RWPE1 (cell line): ENCODE measurements at regions of chr9 and their contacts with region 1.

Region 1: DNA sequence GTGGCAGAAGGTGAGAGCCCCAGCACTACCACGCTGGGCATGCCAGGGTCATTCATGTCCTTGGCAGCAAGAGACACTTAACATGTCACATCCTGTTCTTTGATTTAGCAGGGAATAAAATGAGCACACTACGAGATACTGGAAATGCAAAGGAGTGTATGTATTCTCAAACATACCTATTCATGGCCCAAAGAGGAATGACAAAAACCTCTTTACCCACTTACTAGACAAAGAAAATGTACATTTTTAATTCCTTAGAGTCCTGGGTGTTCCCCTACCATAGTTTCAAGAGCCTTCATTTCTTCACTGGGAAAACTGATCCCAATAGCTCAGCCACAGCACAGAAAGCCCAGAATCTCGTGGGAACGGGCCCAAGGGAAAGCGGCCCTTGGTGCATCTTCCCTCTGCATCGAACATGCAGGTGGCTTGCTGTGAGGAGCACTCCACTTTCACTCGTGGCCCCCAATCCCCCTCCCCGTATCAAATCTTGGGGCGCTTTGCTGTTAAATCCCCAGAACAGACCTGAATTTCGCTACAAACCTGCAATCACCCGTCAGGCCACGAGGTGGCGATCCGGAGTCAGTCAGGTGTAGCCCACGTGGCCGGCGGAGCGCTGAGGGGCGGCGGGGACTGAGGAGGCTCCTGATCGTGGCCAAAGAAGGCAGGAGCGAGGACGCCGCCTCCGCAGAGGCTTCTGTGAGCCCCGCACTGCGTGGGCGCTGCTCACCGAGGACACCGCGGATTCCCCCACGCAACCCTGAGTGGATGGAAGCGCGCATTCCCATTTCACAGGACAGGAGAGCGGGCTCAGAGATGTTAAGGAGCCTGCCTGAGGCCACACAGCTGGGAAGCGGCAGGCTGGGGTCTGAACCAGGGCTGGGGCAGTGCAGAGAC is 91.4 kb downstream of the LMX1B start:
- DNase-seq: peak; percentile 88
- H3K27ac ChIP-seq: peak overlapping the region; percentile 63
- CTCF ChIP-seq: peak; percentile 99

Region 2: GRCh38 chr9:126471084-126471624 is 234.0 kb before region 1 on chr9:
- CTCF ChIA-PET with region 1: no interaction called
- POLR2A ChIA-PET with region 1: no interaction called
- DNase-seq: no peak
- H3K27ac ChIP-seq: no peak overlapping the region
- CTCF ChIP-seq: no peak

Region 3: DNA sequence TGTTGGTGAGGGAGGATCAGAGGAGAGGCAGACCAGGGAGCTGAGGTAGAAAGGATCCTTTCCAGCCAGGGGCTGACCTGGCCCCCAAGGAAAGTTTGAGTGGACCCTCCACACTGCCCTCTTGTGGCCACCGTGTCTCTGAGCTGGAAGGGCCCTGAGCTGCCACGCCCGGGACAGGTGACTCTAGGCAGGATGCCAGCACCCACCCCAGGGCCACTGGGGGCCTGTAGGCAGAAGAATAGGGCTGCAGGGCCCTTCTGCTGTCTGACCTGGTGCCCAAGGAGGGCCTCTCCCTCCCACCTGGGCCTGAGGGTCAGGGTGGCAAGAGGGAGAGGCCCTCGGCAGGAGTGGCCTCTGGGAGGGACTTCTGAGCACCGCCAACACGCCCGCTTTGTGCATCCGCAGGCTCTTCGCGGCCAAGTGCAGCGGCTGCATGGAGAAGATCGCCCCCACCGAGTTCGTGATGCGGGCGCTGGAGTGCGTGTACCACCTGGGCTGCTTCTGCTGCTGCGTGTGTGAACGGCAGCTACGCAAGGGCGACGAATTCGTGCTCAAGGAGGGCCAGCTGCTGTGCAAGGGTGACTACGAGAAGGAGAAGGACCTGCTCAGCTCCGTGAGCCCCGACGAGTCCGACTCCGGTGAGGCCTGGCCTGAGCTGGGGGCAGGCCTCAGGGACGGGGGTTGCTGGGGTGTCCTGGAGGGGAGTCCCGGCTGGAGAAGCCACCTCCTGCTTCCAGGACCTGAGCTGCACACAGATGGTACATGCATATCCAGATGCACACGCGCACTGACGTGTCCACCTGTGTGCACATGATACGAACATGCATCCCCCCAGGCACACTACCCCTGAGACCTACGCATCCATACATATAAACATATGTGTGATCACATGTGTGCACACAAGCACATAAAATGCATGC is 14.4 kb before region 1 on chr9:
- CTCF ChIA-PET with region 1: interaction called, 30 read pairs
- POLR2A ChIA-PET with region 1: no interaction called
- DNase-seq: peak; percentile 72
- H3K27ac ChIP-seq: no peak overlapping the region
- CTCF ChIP-seq: peak; percentile 83

Region 4: DNA sequence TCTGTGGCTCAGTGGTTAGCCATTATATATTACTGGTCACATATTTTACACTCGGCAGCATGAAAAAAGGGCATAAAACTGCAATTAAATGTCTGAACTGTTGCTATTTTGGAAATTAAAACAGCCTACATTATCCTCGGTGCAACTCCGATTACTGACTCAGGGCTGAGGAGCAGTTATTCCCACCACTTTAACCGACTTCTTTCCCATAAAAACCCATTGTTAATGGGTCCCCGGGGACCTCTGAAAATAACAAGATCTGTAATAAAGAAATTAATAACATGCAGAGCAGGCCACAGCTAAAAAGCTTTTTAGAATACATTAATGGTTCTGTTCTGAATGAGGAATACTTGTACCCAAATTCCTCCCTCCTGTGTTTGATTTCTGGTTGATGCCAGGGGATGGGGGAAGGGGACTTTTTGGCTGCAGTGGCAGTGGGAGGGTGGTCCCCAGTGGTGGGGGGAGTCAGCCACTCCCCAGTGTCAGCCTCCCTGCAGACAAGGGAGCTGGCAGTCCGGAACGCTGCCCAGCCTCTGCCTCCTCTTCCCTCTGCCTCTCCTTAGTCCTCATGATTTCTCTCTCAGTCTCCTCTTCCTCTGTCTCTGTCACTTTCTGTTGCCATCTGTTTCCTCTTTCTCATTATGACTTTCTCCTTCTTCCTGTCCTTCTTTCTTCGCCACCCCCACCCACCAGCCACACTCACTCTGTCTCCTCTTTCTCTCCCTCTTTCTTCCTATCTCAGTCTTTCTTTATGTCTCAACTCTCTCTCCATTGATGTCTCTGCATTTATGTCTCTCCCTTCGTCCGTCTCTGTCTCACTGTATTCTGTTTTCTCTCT is 40.7 kb after region 1 on chr9:
- CTCF ChIA-PET with region 1: interaction called, 11 read pairs
- POLR2A ChIA-PET with region 1: no interaction called
- DNase-seq: no peak
- H3K27ac ChIP-seq: no peak overlapping the region
- CTCF ChIP-seq: no peak

Region 5: DNA sequence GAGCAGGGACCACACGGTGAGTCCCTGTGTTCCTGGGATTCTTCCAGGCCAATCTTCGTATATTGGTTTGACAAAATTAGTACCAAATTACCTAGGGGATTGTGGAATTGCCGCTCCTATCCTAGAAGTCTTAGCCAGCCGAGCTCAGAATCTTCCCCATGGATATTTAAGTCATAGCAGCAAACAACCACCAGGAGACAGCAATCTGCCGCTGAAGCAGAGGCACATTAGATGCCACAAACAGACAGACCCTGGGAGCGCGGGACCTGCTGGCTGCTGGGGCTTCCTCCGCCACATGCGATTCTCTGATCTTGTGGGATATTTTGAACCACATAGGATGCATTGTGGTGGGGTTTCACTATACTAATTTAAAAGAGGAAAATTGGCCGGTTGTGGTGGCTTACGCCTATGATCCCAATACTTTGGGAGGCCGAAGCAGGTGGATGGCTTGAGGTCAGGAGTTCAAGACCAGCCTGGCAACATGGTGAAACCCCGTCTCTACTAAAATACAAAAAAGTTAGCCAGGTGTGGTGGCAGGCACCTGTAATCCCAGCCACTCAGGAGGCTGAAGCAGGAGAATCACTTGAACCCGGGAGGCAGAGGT is 68.0 kb after region 1 on chr9:
- CTCF ChIA-PET with region 1: interaction called, 231 read pairs
- POLR2A ChIA-PET with region 1: no interaction called
- DNase-seq: no peak
- H3K27ac ChIP-seq: no peak overlapping the region
- CTCF ChIP-seq: peak; percentile 52

Region 6: DNA sequence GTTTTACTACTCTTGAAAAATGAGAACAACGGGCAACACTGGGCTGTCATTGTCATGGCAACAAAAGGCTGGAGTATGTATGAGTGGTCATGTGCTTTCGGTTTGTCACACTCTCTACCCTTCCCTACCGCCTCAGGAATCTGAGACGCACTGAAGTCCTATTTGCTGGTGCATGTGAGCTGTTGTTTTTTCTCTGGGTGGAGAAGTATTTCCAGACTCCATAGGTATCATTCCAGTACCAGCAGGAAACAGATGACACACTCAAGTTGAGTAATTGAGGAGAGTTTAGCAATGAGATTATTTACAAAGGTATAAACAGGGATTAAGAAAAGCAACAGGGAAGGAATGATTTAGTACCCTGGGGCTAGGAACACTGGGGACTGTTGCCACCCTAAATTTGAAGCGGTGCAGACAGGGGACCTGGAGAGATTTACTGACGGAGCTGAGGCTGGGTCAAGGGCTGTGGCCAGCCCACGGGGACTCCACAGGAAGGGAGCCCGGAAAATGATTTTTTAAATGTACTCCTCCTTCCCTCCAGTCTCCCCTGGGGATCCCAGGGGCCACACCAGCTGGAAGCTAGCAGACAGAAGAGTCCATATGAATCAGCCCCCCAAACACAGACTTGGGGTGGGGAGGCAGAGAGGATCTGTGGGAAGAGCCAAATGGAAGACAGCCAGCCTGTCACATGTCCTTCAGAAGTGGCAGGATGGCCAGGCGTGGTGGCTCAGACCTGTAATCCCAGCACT is 86.5 kb after region 1 on chr9:
- CTCF ChIA-PET with region 1: interaction called, 11 read pairs
- POLR2A ChIA-PET with region 1: no interaction called
- DNase-seq: peak; percentile 94
- H3K27ac ChIP-seq: peak overlapping the region; percentile 96
- CTCF ChIP-seq: no peak

Region 7: GRCh38 chr9:127202461-127203169 is 497.5 kb after region 1 on chr9:
- CTCF ChIA-PET with region 1: no interaction called
- POLR2A ChIA-PET with region 1: no interaction called
- DNase-seq: no peak
- H3K27ac ChIP-seq: no peak overlapping the region
- CTCF ChIP-seq: no peak